PC-3 (cell line): ENCODE measurements at regions of chrX and their contacts with region 1.

Region 1: GRCh38 chrX:12225107-12225506 is 86.8 kb downstream of the FRMPD4 start:
- DNase-seq: peak; percentile 66
- ATAC-seq: peak; percentile 78
- H3K4me3 ChIP-seq: no peak overlapping the region
- H3K27ac ChIP-seq: peak overlapping the region; percentile 86
- H3K4me1 ChIP-seq: peaks cover 29% of the 10 kb centered on the region
- H3K27me3 ChIP-seq: no peaks in the 10 kb centered on the region
- CTCF ChIP-seq: no peak

Region 2: DNA sequence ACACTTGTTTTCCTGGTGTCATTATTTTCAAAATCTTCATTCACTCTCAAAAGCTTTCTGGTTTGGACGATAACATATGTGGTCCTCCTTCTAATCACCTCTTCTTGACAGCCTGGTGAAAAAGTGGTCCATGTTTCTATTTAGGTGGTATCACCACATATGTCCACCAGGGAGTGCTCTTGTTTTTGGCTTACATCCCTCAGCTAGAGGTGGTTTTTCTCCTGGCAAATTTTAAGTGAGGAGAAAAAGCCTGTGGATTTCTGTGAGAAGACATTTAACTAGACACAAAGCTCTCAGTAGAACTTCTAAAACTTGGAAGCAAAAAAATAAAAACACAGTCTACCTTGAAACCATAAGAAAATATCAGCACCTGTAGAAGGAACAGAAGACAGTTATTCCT is 144.8 kb before region 1 on chrX:
- CTCF ChIA-PET with region 1: no interaction called
- POLR2A ChIA-PET with region 1: no interaction called
- intact Hi-C with region 1: no loop called
- DNase-seq: peak; percentile 71
- ATAC-seq: no peak
- H3K4me3 ChIP-seq: no peak overlapping the region
- H3K27ac ChIP-seq: no peak overlapping the region
- H3K4me1 ChIP-seq: no peaks in the 10 kb centered on the region
- H3K27me3 ChIP-seq: no peaks in the 10 kb centered on the region
- CTCF ChIP-seq: peak; percentile 82

Region 3: GRCh38 chrX:12249997-12250396 is 24.9 kb after region 1 on chrX:
- CTCF ChIA-PET with region 1: no interaction called
- POLR2A ChIA-PET with region 1: no interaction called
- intact Hi-C with region 1: loop called (anchors 2 kb)
- DNase-seq: peak; percentile 38
- ATAC-seq: peak; percentile 67
- H3K4me3 ChIP-seq: no peak overlapping the region
- H3K27ac ChIP-seq: no peak overlapping the region
- H3K4me1 ChIP-seq: peaks cover 8% of the 10 kb centered on the region; the same call in 1 of the 2 replicates
- H3K27me3 ChIP-seq: no peaks in the 10 kb centered on the region
- CTCF ChIP-seq: no peak